Activated CD4-positive, alpha-beta T cell treated with anti-CD3 and anti-CD28 coated beads, Interleukin-2, amount 10 ng/mL, durations not matched to agents 7 days and 5 days (primary cell): ENCODE measurements at regions of chr7 and their contacts with region 1.

Region 1: DNA sequence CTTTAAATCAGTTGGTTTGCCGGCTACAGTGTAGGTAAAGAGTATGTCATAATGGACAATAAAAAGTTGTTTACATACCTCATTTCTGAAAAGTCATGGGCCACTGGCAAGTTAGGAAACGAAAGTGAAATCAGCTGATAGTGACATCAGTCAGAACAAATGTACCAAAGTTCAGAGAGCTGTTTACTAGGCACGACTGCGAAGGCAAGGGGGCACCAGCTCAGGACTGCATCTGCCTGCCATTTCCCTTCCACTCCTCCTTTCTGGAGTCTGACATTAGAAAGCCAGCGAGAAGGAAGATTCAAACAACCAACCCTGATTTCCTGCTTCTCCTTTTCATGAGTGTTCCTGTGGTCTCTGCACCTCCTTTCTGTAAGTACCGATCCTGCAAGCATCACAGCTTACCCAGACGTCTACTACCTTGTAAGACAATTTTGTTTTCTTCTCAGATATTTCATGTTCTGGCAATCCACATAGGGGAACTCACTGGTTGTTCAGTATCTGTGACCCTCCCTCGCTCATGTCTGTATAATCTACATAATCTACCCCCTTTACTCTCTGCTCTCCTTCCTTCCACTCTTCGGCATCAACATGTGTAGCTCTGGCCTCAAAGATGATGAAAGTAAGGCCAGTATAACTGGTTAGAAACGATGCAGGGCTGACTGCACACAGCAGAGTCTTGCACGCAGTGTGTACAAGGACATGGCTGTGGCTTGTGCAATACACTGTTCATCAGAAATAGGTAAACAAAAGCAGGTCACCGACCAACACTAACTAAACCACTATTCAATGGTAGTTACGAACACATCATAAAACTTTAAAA is at the start of gene TMEM140:
- DNase-seq: peak; percentile 79
- H3K4me3 Mint-ChIP-seq: peak within 1 kb of the TSS; percentile 86
- H3K27ac Mint-ChIP-seq: peak within 1 kb of the TSS; percentile 96
- H3K4me1 Mint-ChIP-seq: peaks cover 58% of the 10 kb centered on the region
- H3K27me3 Mint-ChIP-seq: no peaks in the 10 kb centered on the region
- total RNA-seq, gene TMEM140: 25.3 to 27.7 TPM

Region 2: GRCh38 chr7:135164357-135165061 is 16.4 kb after region 1 on chr7:
- CTCF ChIA-PET with region 1: interaction called, 11 read pairs
- POLR2A ChIA-PET with region 1: interaction called, 6 read pairs
- DNase-seq: no peak
- H3K4me3 Mint-ChIP-seq: no peak overlapping the region
- H3K27ac Mint-ChIP-seq: peak overlapping the region; percentile 50
- H3K4me1 Mint-ChIP-seq: peaks cover 59% of the 10 kb centered on the region
- H3K27me3 Mint-ChIP-seq: no peaks in the 10 kb centered on the region